AG04450 (cell line): ENCODE measurements at regions of chr16 and their contacts with region 1.

Region 1: GRCh38 chr16:81204798-81205680 is 33.5 kb upstream of the BCO1 start:
- DNase-seq: peak; percentile 27
- H3K4me3 ChIP-seq: no peak overlapping the region
- H3K27ac ChIP-seq: no peak overlapping the region
- H3K27me3 ChIP-seq: peaks cover 17% of the 10 kb centered on the region
- CTCF ChIP-seq: peak; percentile 86

Region 2: DNA sequence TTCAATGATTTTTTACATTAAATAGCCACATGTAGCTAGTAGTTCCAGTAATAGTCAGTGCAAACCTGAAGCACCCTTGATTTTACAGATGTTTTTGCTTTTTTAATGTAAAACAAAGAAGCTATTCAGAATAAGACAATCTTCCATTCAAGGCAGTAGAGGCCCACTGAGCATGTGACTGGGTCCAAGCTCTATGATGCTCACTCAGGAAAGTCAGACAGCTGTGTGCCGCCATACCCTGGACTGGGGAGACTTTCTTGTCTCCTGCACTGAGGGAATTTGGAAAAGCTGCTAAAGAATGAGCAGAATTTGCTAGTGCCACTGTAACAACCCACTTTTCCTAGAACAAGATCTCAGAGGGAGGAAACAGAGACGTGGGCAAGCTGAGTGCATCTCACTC is 186.5 kb before region 1 on chr16:
- CTCF ChIA-PET with region 1: no interaction called
- POLR2A ChIA-PET with region 1: no interaction called
- DNase-seq: no peak
- H3K4me3 ChIP-seq: no peak overlapping the region
- H3K27ac ChIP-seq: no peak overlapping the region
- H3K27me3 ChIP-seq: no peaks in the 10 kb centered on the region
- CTCF ChIP-seq: no peak

Region 3: DNA sequence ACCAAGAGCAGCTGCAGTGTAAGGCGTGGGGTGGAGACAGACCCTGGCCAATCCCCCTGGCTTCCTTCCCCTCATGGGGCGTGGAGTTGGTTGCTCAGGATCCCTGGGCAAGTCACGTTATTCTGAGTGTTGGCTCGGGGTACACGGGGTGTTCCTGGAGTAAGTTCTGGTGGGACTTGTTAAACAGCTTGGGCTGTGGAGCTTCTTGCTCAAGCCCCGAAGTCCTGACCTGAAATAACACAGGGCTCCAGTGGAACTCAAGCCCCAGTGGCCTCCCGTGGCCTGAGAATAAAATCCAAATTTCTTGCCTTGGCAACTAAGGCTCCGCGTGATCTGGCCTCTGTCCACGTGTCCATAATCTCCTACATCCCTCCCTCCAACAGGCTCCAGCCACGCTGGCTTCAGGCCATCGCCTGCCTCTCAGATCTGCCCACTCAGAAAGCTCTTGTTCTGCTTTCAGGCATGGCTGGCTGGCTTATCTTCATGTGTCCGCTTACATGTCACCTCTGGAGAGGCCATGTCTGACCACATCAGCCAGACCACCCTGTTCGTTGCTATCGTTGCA is 15.9 kb before region 1 on chr16:
- CTCF ChIA-PET with region 1: interaction called, 38 read pairs
- POLR2A ChIA-PET with region 1: no interaction called
- DNase-seq: peak; percentile 23
- H3K4me3 ChIP-seq: no peak overlapping the region
- H3K27ac ChIP-seq: no peak overlapping the region
- H3K27me3 ChIP-seq: peaks cover 6% of the 10 kb centered on the region
- CTCF ChIP-seq: no peak

Region 4: GRCh38 chr16:81238296-81239011 is 33.4 kb after region 1 on chr16 and contains the start of gene BCO1:
- CTCF ChIA-PET with region 1: interaction called, 19 read pairs
- POLR2A ChIA-PET with region 1: no interaction called
- DNase-seq: peak; percentile 18
- H3K4me3 ChIP-seq: peak within 1 kb of the TSS; percentile 55
- H3K27ac ChIP-seq: no peak within 1 kb of the TSS
- H3K27me3 ChIP-seq: no peaks in the 10 kb centered on the region
- CTCF ChIP-seq: no peak
- polyA plus RNA-seq, gene BCO1: not detected in 2 replicates

Region 5: GRCh38 chr16:81366316-81366932 is 161.4 kb after region 1 on chr16:
- CTCF ChIA-PET with region 1: interaction called, 32 read pairs
- POLR2A ChIA-PET with region 1: no interaction called
- DNase-seq: peak; percentile 13
- H3K4me3 ChIP-seq: no peak overlapping the region
- H3K27ac ChIP-seq: no peak overlapping the region
- H3K27me3 ChIP-seq: no peaks in the 10 kb centered on the region
- CTCF ChIP-seq: peak; percentile 68